ENCODE measurements at regions of chr17 and their contacts with region 1.

Region 1: GRCh38 chr17:8156246-8156992 is 4.2 kb upstream of the PER1 start:
- DNase-seq: peak; percentile 100
- H3K4me3 Mint-ChIP-seq: no peak overlapping the region
- H3K27ac Mint-ChIP-seq: no peak overlapping the region
- H3K4me1 Mint-ChIP-seq: peaks cover 51% of the 10 kb centered on the region
- H3K27me3 Mint-ChIP-seq: no peaks in the 10 kb centered on the region

Region 2: GRCh38 chr17:7972131-7972785 is 184.2 kb before region 1 on chr17:
- CTCF ChIA-PET with region 1: no interaction called
- POLR2A ChIA-PET with region 1: no interaction called
- DNase-seq: no peak
- H3K4me3 Mint-ChIP-seq: no peak overlapping the region
- H3K27ac Mint-ChIP-seq: no peak overlapping the region
- H3K4me1 Mint-ChIP-seq: no peaks in the 10 kb centered on the region
- H3K27me3 Mint-ChIP-seq: peaks cover 17% of the 10 kb centered on the region

Region 3: DNA sequence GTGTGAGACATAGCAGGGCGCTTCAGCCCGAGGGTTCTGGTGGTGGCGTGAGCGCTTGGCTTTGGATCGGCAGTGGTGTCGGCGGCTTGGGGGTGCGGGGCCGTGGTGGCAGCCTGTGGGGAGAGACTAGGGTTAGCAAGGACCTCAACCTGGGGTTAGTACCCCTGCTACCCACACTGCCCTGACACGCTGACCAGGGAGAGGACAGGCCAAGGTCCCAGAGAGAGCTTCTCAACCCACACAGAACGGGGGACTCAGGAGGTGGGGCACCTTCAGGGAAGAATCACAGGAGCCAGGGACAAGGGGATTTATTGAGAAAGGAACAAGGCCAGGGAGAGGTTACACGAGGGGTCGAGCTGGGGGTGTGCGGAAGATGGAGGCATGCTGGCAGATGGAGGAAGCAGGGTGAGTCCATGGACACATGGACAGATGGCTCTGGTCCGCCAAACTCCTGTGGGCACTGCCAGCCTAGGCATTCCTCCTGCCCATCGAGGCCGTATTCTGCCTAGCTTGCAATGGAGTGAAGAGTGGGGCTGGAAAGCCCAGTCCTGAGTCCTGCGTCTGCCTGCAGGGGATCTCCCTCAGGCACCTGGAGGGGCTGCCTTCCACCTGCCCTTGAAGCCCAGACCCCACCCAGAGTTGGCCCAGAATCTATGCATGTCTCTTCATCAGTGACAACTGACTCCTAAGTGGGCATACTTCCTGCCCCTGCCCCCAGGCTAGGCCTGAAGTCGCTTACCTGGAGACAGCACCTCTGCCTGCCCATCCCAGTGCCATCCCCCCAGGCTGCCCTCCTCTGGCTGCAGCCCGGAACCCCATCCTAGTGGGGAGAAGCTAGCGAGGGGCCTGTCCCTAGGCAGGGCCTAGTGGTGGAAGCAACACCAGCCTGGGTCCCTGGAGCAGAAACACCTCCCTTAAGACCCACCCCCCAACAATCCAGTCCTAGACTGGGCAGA is 12.4 kb before region 1 on chr17:
- CTCF ChIA-PET with region 1: interaction called, 24 read pairs
- POLR2A ChIA-PET with region 1: interaction called, 62 read pairs
- DNase-seq: no peak
- H3K4me3 Mint-ChIP-seq: no peak overlapping the region
- H3K27ac Mint-ChIP-seq: no peak overlapping the region
- H3K4me1 Mint-ChIP-seq: no peaks in the 10 kb centered on the region
- H3K27me3 Mint-ChIP-seq: no peaks in the 10 kb centered on the region

Region 4: GRCh38 chr17:8209909-8210760 is 53.7 kb after region 1 on chr17 and contains the start of gene AURKB:
- CTCF ChIA-PET with region 1: no interaction called
- POLR2A ChIA-PET with region 1: interaction called, 13 read pairs
- DNase-seq: peak; percentile 94
- H3K4me3 Mint-ChIP-seq: peak within 1 kb of the TSS; percentile 87
- H3K27ac Mint-ChIP-seq: peak within 1 kb of the TSS; percentile 86
- H3K4me1 Mint-ChIP-seq: peaks cover 39% of the 10 kb centered on the region
- H3K27me3 Mint-ChIP-seq: no peaks in the 10 kb centered on the region
- total RNA-seq, gene AURKB: 160 to 167 TPM